ENCODE measurements at regions of chr11 and their contacts with region 1.

Region 1: DNA sequence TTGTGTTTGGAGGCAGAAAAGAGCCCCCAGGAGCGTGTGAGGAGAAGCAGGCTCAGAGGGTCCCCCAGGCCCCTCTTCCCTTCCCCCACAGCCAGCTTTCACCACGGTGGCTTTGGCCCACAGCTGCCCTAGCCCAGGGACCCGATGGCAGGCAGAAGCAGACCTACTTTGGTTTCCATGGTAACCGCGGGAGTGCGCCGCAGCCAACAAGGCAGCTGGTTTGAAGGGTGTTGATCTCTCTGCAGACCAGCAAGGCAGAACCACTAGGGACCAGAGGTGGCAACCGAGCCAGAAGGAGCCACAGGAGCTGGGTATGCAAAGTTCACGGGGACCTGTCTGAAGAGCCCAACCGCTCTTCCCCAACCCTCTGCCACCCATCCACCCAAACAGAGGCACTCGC is 69.4 kb downstream of the BUD13 start:
- DNase-seq: peak in 1 of 2 experiments; percentile 76
- H3K4me3 ChIP-seq: no peak overlapping the region
- H3K27ac ChIP-seq: no peak overlapping the region; the same call in 1 of the 2 replicates
- H3K4me1 ChIP-seq: peaks cover 0 to 13% (median 7%) of the 10 kb centered on the region in 4 experiments; a peak in 5 of 7 replicates
- H3K27me3 ChIP-seq: peaks cover 0 to 15% (median 8%) of the 10 kb centered on the region in 4 experiments; a peak in 4 of 7 replicates
- CTCF ChIP-seq: peak in 1 of 3 experiments; percentile 7; a peak in 1 of 4 replicates
- EP300 ChIP-seq: no peak
- POLR2A ChIP-seq: no peak
- RAD21 ChIP-seq: no peak

Region 2: GRCh38 chr11:116715383-116715782 is 12.0 kb after region 1 on chr11:
- CTCF ChIA-PET with region 1: interaction called, 17 read pairs
- POLR2A ChIA-PET with region 1: interaction called, 3 read pairs
- DNase-seq: no peak
- H3K4me3 ChIP-seq: no peak overlapping the region
- H3K27ac ChIP-seq: no peak overlapping the region
- H3K4me1 ChIP-seq: peaks cover 0 to 19% (median 11%) of the 10 kb centered on the region in 4 experiments; a peak in 6 of 7 replicates
- H3K27me3 ChIP-seq: peaks cover 0 to 6% (median 4%) of the 10 kb centered on the region in 4 experiments; a peak in 3 of 7 replicates
- CTCF ChIP-seq: peak; percentile 48 to 62 (median 59)
- EP300 ChIP-seq: no peak
- POLR2A ChIP-seq: no peak
- RAD21 ChIP-seq: peak in 1 of 2 experiments; percentile 30; a peak in 2 of 4 replicates

Region 3: GRCh38 chr11:116742104-116742503 is 38.7 kb after region 1 on chr11:
- CTCF ChIA-PET with region 1: interaction called, 16 read pairs
- POLR2A ChIA-PET with region 1: no interaction called
- DNase-seq: no peak
- H3K4me3 ChIP-seq: no peak overlapping the region
- H3K27ac ChIP-seq: no peak overlapping the region
- H3K4me1 ChIP-seq: peaks cover 0 to 4% (median 0%) of the 10 kb centered on the region in 4 experiments; a peak in 4 of 7 replicates
- H3K27me3 ChIP-seq: no peaks in the 10 kb centered on the region
- CTCF ChIP-seq: no peak
- EP300 ChIP-seq: no peak
- POLR2A ChIP-seq: no peak
- RAD21 ChIP-seq: no peak

Measured in H1 (cell line).